ENCODE measurements at regions of chr10 and their contacts with region 1.

Region 1: GRCh38 chr10:80144067-80144695 is 11.7 kb downstream of the PLAC9 start:
- DNase-seq: peak; percentile 53
- H3K4me3 Mint-ChIP-seq: peak overlapping the region; percentile 62
- H3K27ac Mint-ChIP-seq: peak overlapping the region; percentile 57
- H3K4me1 Mint-ChIP-seq: peaks cover 18% of the 10 kb centered on the region
- H3K27me3 Mint-ChIP-seq: peaks cover 8% of the 10 kb centered on the region

Region 2: GRCh38 chr10:79487296-79488194 is 656.6 kb before region 1 on chr10:
- CTCF ChIA-PET with region 1: no interaction called
- POLR2A ChIA-PET with region 1: no interaction called
- intact Hi-C with region 1: loop called (anchors 10 kb)
- DNase-seq: peak; percentile 45
- H3K4me3 Mint-ChIP-seq: no peak overlapping the region
- H3K27ac Mint-ChIP-seq: no peak overlapping the region
- H3K4me1 Mint-ChIP-seq: no peaks in the 10 kb centered on the region
- H3K27me3 Mint-ChIP-seq: no peaks in the 10 kb centered on the region

Region 3: GRCh38 chr10:80110986-80111385 is 33.2 kb before region 1 on chr10:
- CTCF ChIA-PET with region 1: no interaction called
- POLR2A ChIA-PET with region 1: no interaction called
- intact Hi-C with region 1: no loop called
- DNase-seq: no peak
- H3K4me3 Mint-ChIP-seq: no peak overlapping the region
- H3K27ac Mint-ChIP-seq: peak overlapping the region; percentile 18
- H3K4me1 Mint-ChIP-seq: peaks cover 15% of the 10 kb centered on the region
- H3K27me3 Mint-ChIP-seq: no peaks in the 10 kb centered on the region

Region 4: DNA sequence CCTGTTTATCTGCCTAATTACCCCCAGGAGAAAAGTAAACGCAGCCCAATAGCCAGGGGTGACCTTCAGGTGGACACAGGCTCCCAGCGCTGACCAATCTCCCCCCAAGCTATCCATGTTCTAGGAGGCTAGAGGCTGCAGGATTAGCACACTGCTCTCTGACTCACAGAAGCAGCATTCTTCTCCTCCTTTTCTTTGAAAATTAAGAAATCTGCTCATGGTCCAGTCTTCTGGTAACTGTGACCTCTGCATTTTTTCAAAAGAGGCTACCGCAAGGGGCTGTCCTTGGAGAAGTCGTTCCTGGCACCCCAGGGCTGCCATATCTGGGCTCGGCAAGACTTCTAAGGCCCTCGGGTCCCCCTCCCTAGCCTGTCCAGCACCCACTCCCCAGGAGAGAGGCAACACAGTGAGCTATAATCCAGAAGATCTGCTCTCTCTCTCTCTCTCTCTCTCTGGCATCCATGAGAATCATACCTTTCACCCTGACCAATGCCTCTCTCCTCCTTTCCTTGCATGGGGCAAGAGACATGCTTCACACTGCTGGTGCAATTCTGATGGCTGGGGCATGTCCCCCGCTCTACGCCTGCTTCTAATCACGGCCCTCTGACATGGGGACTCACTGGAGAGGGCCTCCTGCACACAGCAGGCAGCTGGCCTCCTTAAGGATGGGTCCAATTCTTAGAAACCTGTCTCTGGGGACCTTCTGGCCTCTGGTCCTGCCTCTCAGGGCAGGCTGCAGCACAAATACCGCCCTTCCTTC is 33.8 kb after region 1 on chr10:
- CTCF ChIA-PET with region 1: interaction called, 10 read pairs
- POLR2A ChIA-PET with region 1: no interaction called
- intact Hi-C with region 1: no loop called
- DNase-seq: no peak
- H3K4me3 Mint-ChIP-seq: no peak overlapping the region
- H3K27ac Mint-ChIP-seq: no peak overlapping the region
- H3K4me1 Mint-ChIP-seq: peaks cover 57% of the 10 kb centered on the region
- H3K27me3 Mint-ChIP-seq: no peaks in the 10 kb centered on the region

Region 5: DNA sequence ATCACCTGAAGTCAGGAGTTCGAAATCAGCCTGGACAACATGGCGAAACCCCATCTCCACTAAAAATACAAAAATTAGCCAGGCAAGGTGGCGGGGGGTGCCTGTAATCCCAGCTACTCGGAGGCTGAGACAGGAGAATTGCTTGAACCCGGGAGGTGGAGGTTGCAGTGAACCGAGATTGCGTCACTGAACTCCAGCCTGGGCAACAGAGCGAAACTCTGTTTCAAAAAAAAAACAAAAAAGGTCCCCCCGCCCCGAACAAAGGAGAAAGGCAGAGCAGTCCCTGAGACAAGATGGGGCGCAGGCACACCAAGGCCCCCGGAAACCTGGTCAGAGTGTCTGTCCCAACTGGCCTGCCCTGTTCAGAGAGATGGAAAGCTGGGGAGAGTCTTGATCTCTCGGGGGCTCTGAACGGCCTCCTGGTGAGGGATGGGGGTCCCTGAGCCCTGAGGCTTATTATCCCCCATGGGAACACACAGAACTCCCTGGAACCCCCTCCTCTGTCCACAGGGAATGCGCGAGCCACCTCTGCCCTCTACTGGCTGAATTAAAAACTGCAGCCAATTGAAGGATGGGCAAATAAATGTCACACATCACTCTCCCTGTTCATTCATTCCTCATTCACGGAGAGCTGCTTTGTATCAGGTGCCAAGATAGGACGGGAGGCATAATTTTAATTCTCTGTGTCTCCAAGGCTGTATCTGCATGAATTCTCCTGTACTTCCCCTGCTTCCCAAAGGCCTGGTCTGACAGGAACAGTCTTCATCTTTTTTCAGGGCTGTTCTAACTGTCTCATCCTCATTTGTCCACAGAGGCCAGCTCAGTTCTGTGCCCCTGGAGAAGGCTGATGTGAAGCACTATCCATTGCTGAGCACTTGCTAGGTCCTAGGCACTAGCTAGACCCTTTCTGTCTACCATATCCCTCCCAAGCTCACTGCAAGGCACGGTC is 116.4 kb after region 1 on chr10:
- CTCF ChIA-PET with region 1: interaction called, 19 read pairs
- POLR2A ChIA-PET with region 1: no interaction called
- intact Hi-C with region 1: no loop called
- DNase-seq: peak; percentile 41
- H3K4me3 Mint-ChIP-seq: no peak overlapping the region
- H3K27ac Mint-ChIP-seq: no peak overlapping the region
- H3K4me1 Mint-ChIP-seq: no peaks in the 10 kb centered on the region
- H3K27me3 Mint-ChIP-seq: peaks cover 6% of the 10 kb centered on the region

Region 6: GRCh38 chr10:80280973-80281691 is 137.0 kb after region 1 on chr10:
- CTCF ChIA-PET with region 1: no interaction called
- POLR2A ChIA-PET with region 1: no interaction called
- intact Hi-C with region 1: no loop called
- DNase-seq: no peak
- H3K4me3 Mint-ChIP-seq: no peak overlapping the region
- H3K27ac Mint-ChIP-seq: no peak overlapping the region
- H3K4me1 Mint-ChIP-seq: no peaks in the 10 kb centered on the region
- H3K27me3 Mint-ChIP-seq: peaks cover 3% of the 10 kb centered on the region

Measured in activated CD4-positive, alpha-beta memory T cell treated with anti-CD3 and anti-CD28 coated beads for 36 hours (primary cell).